AG04450 (cell line): ENCODE measurements at regions of chr13 and their contacts with region 1.

Region 1: DNA sequence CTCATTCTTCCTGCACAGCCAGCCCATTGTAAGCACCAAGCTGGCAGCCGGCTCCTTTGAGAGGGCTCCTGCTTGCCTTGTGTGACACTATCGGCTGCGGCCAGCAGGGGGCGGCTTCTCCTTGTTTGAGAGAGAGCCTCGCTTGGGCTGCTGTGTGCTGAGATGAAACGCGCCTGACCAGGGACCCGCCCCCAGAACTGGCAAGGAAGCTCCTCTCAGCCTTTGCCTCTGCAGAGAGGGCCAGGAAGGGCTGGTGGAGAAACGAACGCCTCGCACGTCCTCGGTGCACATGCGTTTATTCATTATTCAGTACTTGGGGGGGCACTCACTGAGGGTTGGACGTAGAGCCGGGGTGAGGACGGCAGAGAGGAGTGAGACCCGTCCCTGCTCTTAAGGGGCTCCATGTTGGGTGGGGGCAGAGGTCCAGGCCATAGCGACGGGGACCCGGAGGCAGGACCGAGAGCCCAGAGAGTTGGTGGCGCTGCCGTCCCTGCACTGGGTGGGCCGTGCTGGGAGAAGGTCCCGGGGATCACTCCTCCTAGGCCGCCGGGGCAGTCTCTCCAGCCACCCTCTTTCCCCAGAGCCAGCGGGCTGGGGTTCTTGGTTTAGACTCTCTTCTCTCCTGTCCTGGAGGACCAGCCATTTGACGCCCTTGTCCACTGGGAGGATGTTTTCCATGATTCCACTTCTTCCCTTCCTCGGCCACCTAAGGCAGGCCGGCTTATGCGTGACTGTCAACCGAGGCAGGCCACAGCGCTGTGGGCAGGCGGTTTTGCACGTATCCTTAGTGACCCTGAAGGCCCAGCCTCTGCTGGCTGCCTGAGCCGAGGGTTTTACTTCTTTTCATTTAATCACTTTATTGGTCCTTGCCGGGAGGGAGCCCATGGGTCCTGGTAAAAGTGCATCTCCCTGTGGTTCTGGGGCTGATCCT is 174.5 kb downstream of the KATNAL1 start:
- DNase-seq: peak; percentile 81
- H3K4me3 ChIP-seq: no peak overlapping the region
- H3K27ac ChIP-seq: no peak overlapping the region
- H3K27me3 ChIP-seq: no peaks in the 10 kb centered on the region
- CTCF ChIP-seq: peak; percentile 89

Region 2: GRCh38 chr13:30158774-30159445 is 26.0 kb after region 1 on chr13:
- CTCF ChIA-PET with region 1: interaction called, 70 read pairs
- POLR2A ChIA-PET with region 1: no interaction called
- DNase-seq: peak; percentile 33
- H3K4me3 ChIP-seq: no peak overlapping the region
- H3K27ac ChIP-seq: peak overlapping the region; percentile 33
- H3K27me3 ChIP-seq: peaks cover 7% of the 10 kb centered on the region
- CTCF ChIP-seq: peak; percentile 64

Region 3: DNA sequence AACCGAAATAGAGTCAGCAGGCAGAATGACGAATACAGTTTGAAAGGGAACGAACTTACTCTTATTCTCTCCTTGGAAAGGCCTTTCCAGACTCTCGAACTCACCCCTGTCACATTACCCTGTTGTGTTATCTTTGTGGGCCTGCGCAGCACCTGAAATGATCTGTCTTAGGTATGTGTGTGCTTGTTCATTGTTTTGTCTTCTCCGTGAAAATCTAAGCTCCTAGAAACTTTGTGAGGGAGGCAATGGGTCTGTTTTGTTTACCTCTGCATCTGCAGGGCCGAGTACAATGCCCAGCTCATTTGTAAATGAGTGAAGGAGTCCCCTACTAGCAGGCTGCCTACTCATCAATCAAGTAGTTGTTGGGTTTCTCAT is 313.2 kb after region 1 on chr13:
- CTCF ChIA-PET with region 1: interaction called, 11 read pairs
- POLR2A ChIA-PET with region 1: no interaction called
- DNase-seq: no peak
- H3K4me3 ChIP-seq: peak overlapping the region; percentile 36
- H3K27ac ChIP-seq: peak overlapping the region; percentile 59
- H3K27me3 ChIP-seq: no peaks in the 10 kb centered on the region
- CTCF ChIP-seq: no peak

Region 4: GRCh38 chr13:30493658-30494381 is 360.9 kb after region 1 on chr13:
- CTCF ChIA-PET with region 1: interaction called, 15 read pairs
- POLR2A ChIA-PET with region 1: no interaction called
- DNase-seq: no peak
- H3K4me3 ChIP-seq: no peak overlapping the region
- H3K27ac ChIP-seq: no peak overlapping the region
- H3K27me3 ChIP-seq: no peaks in the 10 kb centered on the region
- CTCF ChIP-seq: no peak

Region 5: DNA sequence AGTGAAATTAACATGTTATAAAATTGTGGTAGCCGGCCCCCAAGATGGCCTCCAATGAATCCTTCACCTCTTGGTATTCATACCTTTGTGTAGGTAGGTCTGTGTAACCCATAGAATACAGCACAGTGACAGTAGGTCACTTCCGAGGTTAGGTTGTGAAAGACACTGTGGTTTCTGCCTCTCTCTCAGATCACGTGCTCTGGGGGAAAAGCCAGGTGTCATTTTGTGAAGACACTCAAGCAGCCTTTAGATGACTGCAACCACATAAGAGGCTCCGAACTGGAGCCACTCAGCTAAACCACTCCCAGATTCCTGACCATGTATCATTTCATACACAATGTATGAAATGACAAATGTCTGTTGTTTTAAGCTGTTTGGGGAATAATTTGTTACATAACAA is 475.0 kb after region 1 on chr13:
- CTCF ChIA-PET with region 1: interaction called, 16 read pairs
- POLR2A ChIA-PET with region 1: no interaction called
- DNase-seq: no peak
- H3K4me3 ChIP-seq: no peak overlapping the region
- H3K27ac ChIP-seq: no peak overlapping the region
- H3K27me3 ChIP-seq: no peaks in the 10 kb centered on the region
- CTCF ChIP-seq: no peak

Region 6: DNA sequence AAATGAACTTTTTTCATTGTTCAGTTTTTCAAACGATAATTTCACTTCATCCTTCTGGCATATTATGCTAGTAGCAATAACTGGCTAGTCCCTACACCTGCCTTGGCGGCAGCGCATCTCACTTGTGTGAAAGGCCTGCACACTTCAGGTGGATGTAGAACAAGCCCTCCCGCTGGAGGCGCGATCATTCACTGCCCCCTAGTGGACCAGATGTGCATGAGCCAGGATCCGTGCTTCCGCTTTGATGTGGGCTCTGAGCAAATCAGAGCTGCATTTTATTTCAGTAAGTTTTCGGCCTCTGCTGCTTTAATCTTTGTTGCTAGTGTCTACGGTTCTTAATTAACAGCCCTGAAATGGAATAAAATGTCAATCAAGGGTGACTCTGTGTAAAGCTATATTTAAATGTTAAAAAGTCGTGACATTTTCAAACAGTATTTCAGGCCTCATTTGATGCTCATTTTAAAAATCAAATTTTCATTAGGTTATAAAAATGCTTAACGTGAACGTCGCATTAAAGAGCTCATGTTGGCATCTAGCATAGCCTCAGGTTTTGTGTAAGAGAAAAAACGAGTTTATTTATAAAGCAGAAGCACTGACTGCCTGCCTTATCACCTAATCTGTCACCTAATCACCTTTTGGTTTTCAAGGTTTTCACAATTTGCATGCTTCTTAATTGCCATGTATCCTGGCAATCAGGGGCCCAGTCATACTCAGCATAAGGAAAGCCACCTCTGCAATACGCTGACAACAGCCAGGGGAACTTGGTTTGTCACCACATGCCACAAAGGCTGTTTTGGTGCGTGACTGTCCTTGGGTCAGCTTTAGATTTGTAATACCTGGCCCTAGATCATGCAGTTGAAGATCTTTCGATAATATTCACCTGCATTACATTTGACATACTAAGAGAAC is 911.7 kb after region 1 on chr13:
- CTCF ChIA-PET with region 1: interaction called, 19 read pairs
- POLR2A ChIA-PET with region 1: no interaction called
- DNase-seq: peak; percentile 57
- H3K4me3 ChIP-seq: no peak overlapping the region
- H3K27ac ChIP-seq: peak overlapping the region; percentile 95
- H3K27me3 ChIP-seq: no peaks in the 10 kb centered on the region
- CTCF ChIP-seq: peak; percentile 97